MCF 10A (cell line): ENCODE measurements at regions of chr17 and their contacts with region 1.

Region 1: GRCh38 chr17:74646231-74646630 is 22.7 kb upstream of the CD300E start:
- DNase-seq: peak; percentile 61
- H3K4me3 Mint-ChIP-seq: no peak overlapping the region
- H3K27ac Mint-ChIP-seq: no peak overlapping the region
- H3K4me1 Mint-ChIP-seq: no peaks in the 10 kb centered on the region
- H3K27me3 Mint-ChIP-seq: peaks cover 52% of the 10 kb centered on the region
- CTCF ChIP-seq: peak; percentile 62

Region 2: DNA sequence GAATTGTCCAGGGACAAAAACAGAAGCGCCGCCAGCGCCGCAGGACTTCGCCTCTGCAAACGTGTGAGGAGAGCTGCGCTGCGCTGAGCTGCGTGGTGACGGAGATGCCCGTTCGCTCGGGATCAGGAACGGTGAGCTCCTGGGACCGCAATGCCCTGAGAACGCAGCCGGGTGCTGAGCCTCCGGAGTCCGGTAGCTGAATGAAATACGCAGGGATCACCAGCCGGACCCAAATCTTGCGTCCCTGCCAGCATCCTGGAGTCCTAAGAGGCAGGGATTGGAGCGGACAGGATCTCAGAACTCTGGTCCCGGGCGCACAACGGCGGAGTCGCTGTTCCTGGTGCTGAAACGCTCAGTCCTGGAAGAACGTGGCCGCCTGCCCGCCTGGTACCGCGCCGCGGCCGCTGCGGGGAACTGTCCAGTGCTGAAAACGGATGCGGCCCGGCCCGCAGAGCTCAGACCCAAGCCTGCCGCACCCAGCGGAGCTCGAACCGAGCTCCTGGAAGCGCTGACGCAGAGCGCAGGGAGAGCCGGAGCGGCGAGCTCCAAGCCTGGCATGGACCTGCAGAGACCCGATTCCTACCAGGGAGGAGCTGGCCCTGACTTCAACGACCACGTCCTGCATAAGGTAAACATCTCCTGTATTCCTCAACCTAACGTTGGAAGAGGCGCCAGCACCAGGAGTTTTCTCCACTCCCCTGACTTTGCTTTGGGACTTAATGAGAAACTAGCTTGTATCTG is 25.0 kb after region 1 on chr17:
- CTCF ChIA-PET with region 1: no interaction called
- POLR2A ChIA-PET with region 1: no interaction called
- intact Hi-C with region 1: loop called (anchors 1 kb)
- DNase-seq: no peak
- H3K4me3 Mint-ChIP-seq: no peak overlapping the region
- H3K27ac Mint-ChIP-seq: no peak overlapping the region
- H3K4me1 Mint-ChIP-seq: no peaks in the 10 kb centered on the region
- H3K27me3 Mint-ChIP-seq: peaks cover 76% of the 10 kb centered on the region
- CTCF ChIP-seq: no peak

Region 3: GRCh38 chr17:74748529-74749365 is 102.5 kb after region 1 on chr17 and contains the start of gene NHERF1:
- CTCF ChIA-PET with region 1: no interaction called
- POLR2A ChIA-PET with region 1: no interaction called
- intact Hi-C with region 1: no loop called
- DNase-seq: peak; percentile 94
- H3K4me3 Mint-ChIP-seq: peak within 1 kb of the TSS; percentile 88
- H3K27ac Mint-ChIP-seq: peak within 1 kb of the TSS; percentile 57
- H3K4me1 Mint-ChIP-seq: peaks cover 34% of the 10 kb centered on the region
- H3K27me3 Mint-ChIP-seq: no peaks in the 10 kb centered on the region
- CTCF ChIP-seq: no peak
- total RNA-seq, gene NHERF1: 23.9 and 25.3 TPM in 2 replicates